Cardiac septum (tissue), 1 donor: ENCODE measurements at regions of chr7 and their contacts with region 1.

Region 1: GRCh38 chr7:151736403-151736909 is 140.5 kb downstream of the PRKAG2 start:
- DNase-seq: no peak

Region 2: GRCh38 chr7:151631968-151632749 is 104.3 kb before region 1 on chr7:
- intact Hi-C with region 1: loop called (anchors 5 kb)
- DNase-seq: peak; percentile 95

Region 3: GRCh38 chr7:151705636-151706276 is 30.7 kb before region 1 on chr7:
- intact Hi-C with region 1: no loop called
- DNase-seq: no peak

Region 4: GRCh38 chr7:152424348-152425108 is 688.1 kb after region 1 on chr7:
- intact Hi-C with region 1: no loop called
- DNase-seq: no peak